Activated CD4-positive, alpha-beta T cell treated with anti-CD3 and anti-CD28 coated beads, Interleukin-2, amount 10 ng/mL, durations not matched to agents 7 days and 5 days (primary cell): ENCODE measurements at regions of chr6 and their contacts with region 1.

Region 1: GRCh38 chr6:83067448-83068413 is at the start of gene DOP1A:
- DNase-seq: peak; percentile 96
- H3K4me3 Mint-ChIP-seq: peak within 1 kb of the TSS; percentile 88
- H3K27ac Mint-ChIP-seq: peak within 1 kb of the TSS; percentile 88
- H3K4me1 Mint-ChIP-seq: peaks cover 47% of the 10 kb centered on the region
- H3K27me3 Mint-ChIP-seq: no peaks in the 10 kb centered on the region
- total RNA-seq, gene DOP1A: 15.4 to 18.5 TPM

Region 2: DNA sequence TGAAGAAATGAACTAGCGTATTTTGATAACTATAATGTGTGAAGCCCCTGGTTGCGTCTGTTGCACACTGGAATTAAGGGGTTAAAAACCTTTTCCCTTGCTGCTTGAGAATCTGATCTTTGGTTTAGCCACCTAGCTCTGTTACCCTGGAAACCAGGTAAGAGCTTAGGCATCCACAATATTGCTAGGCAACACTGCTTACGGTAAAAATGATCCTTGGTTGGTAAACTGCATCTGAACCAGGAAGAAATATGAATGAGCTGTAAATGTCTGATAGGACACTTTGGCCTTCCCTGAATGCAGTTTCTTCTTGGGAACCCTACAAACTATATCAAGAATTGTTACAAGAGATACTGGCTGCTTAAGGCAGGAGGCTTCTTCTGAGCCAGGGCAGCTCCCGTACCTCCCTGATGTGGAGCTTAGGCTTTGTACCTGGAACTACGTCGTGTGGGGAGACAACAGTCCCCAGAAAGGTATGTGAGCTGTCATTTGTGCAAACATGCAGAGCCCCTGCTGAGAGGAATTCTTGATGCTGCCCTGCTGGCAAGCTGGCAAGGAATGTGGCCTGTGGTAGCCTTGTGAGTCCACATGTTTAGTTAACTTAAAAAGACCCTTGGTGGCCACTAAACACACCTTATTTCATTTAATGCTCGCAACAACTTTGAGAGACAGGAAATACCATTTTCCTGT is 20.5 kb before region 1 on chr6:
- CTCF ChIA-PET with region 1: interaction called, 59 read pairs
- POLR2A ChIA-PET with region 1: no interaction called
- DNase-seq: no peak
- H3K4me3 Mint-ChIP-seq: no peak overlapping the region
- H3K27ac Mint-ChIP-seq: no peak overlapping the region
- H3K4me1 Mint-ChIP-seq: no peaks in the 10 kb centered on the region
- H3K27me3 Mint-ChIP-seq: no peaks in the 10 kb centered on the region

Region 3: GRCh38 chr6:83183082-83183828 is 115.5 kb after region 1 on chr6:
- CTCF ChIA-PET with region 1: interaction called, 10 read pairs
- POLR2A ChIA-PET with region 1: no interaction called
- DNase-seq: no peak
- H3K4me3 Mint-ChIP-seq: no peak overlapping the region
- H3K27ac Mint-ChIP-seq: no peak overlapping the region
- H3K4me1 Mint-ChIP-seq: peaks cover 8% of the 10 kb centered on the region
- H3K27me3 Mint-ChIP-seq: no peaks in the 10 kb centered on the region

Region 4: GRCh38 chr6:83199173-83199862 is 131.6 kb after region 1 on chr6:
- CTCF ChIA-PET with region 1: interaction called, 28 read pairs
- POLR2A ChIA-PET with region 1: no interaction called
- DNase-seq: no peak
- H3K4me3 Mint-ChIP-seq: no peak overlapping the region
- H3K27ac Mint-ChIP-seq: no peak overlapping the region
- H3K4me1 Mint-ChIP-seq: peaks cover 2% of the 10 kb centered on the region
- H3K27me3 Mint-ChIP-seq: peaks cover 5% of the 10 kb centered on the region

Region 5: DNA sequence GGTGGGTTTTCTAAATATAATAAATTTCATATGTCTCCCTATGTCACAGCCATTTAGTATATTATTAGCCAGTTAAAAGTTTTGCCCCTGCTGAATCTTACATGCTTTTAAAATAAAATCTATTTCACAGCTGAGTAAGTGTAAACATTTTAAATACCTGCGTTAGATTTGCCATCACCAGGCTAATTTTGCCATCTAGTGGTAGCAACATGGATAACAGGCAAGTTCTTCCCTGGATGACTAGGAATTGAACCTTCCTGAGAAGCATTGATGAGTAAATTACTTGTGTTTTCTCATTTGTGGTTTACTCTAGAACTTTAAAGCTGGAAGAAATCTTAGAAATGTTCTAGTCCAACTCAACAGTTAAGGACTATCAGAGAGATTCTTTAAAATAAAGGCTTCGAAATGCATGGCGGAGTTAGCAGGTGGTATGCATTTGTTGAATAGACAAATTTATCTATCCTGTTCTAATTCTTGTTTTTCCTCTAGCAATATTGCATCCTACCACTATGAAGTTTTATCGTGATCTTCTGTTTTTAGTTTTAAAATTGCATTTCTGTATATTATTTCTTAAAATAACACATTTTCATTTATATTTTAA is 447.2 kb after region 1 on chr6:
- CTCF ChIA-PET with region 1: interaction called, 21 read pairs
- POLR2A ChIA-PET with region 1: no interaction called
- DNase-seq: peak; percentile 44
- H3K4me3 Mint-ChIP-seq: no peak overlapping the region
- H3K27ac Mint-ChIP-seq: no peak overlapping the region
- H3K4me1 Mint-ChIP-seq: peaks cover 2% of the 10 kb centered on the region
- H3K27me3 Mint-ChIP-seq: peaks cover 35% of the 10 kb centered on the region